PC-9 (cell line): ENCODE measurements at regions of chr22 and their contacts with region 1.

Region 1: GRCh38 chr22:30079952-30080533 is at the start of gene HORMAD2:
- DNase-seq: peak; percentile 70 to 80
- H3K4me3 ChIP-seq: peak within 1 kb of the TSS; percentile 58
- H3K27ac ChIP-seq: no peak within 1 kb of the TSS
- H3K4me1 ChIP-seq: no peaks in the 10 kb centered on the region
- H3K27me3 ChIP-seq: no peaks in the 10 kb centered on the region
- CTCF ChIP-seq: no peak
- total RNA-seq, gene HORMAD2: 0.20 TPM in 1 of 2 replicates, not detected in the other

Region 2: GRCh38 chr22:29654356-29654755 is 425.7 kb before region 1 on chr22:
- CTCF ChIA-PET with region 1: no interaction called
- POLR2A ChIA-PET with region 1: interaction called, 12 read pairs
- intact Hi-C with region 1: no loop called
- DNase-seq: no peak
- H3K4me3 ChIP-seq: no peak overlapping the region
- H3K27ac ChIP-seq: no peak overlapping the region
- H3K4me1 ChIP-seq: no peaks in the 10 kb centered on the region
- H3K27me3 ChIP-seq: no peaks in the 10 kb centered on the region
- CTCF ChIP-seq: no peak

Region 3: DNA sequence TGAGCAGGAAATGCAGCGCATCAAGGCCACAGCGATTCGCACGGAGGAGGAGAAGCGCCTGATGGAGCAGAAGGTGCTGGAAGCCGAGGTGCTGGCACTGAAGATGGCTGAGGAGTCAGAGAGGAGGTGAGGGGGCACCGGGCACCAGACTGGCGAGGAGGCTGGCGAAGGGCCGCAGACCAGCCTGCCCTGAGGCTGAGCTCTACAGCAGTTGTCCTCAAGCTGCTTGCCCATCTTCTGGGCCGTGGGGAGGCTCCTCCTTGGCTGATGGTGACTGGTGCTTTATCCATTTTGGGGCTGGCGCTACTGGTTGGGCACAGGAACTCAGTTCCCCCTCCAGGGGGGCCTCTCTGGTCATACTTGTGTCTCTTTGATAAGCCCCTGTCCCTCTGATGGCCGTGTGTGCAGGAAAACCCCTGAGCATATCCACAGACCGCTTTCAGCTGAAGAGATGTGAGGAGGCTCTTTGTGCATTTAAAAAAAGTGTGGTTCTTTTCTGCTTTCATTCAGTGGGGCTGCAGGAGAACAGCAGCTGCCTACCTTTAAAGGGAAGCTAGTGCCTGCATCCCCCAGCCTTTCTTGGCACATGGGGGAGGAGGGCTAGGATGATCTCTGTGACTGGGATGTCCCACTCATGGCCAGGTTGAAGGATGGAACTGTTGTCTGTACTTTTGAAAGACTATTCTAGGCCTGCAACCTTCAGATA is 406.5 kb before region 1 on chr22:
- CTCF ChIA-PET with region 1: no interaction called
- POLR2A ChIA-PET with region 1: no interaction called
- intact Hi-C with region 1: no loop called
- DNase-seq: no peak
- H3K4me3 ChIP-seq: no peak overlapping the region
- H3K27ac ChIP-seq: no peak overlapping the region
- H3K4me1 ChIP-seq: no peaks in the 10 kb centered on the region
- H3K27me3 ChIP-seq: no peaks in the 10 kb centered on the region
- CTCF ChIP-seq: no peak

Region 4: GRCh38 chr22:29710922-29711593 is 369.0 kb before region 1 on chr22:
- CTCF ChIA-PET with region 1: no interaction called
- POLR2A ChIA-PET with region 1: interaction called, 23 read pairs
- intact Hi-C with region 1: no loop called
- DNase-seq: peak in 1 of 2 experiments; percentile 80
- H3K4me3 ChIP-seq: no peak overlapping the region
- H3K27ac ChIP-seq: no peak overlapping the region
- H3K4me1 ChIP-seq: 0 out of 2 replicates have a peak, but pooled peaks cover 11% of the 10 kb centered on the region
- H3K27me3 ChIP-seq: no peaks in the 10 kb centered on the region
- CTCF ChIP-seq: no peak

Region 5: DNA sequence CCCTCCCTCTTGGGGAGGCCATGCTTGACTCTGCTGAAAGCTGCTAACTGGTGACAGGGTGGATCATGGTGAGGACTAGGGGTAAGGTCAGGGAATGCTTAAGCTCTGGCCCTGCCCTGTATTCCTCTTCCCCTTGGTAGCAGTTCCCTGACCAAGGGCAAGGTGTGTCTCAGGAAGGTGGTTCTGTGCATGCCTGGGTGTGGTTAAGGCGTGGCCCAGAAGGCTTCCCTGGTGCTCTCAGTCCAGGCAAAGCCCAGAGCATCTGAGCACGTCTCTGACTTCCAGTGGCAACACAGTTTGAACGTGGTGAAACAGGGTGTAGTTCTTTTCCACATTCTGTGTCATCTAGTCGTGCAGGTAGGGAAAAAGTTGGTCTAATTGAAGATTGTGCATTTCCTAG is 52.9 kb before region 1 on chr22:
- CTCF ChIA-PET with region 1: no interaction called
- POLR2A ChIA-PET with region 1: no interaction called
- intact Hi-C with region 1: loop called (anchors 10 kb)
- DNase-seq: peak in 1 of 2 experiments; percentile 43
- H3K4me3 ChIP-seq: no peak overlapping the region
- H3K27ac ChIP-seq: 0 out of 2 replicates have a peak overlapping the region, but pooled peaks have one; percentile 2
- H3K4me1 ChIP-seq: peaks cover 10% of the 10 kb centered on the region
- H3K27me3 ChIP-seq: no peaks in the 10 kb centered on the region
- CTCF ChIP-seq: no peak

Region 6: GRCh38 chr22:30094804-30095203 is 14.8 kb after region 1 on chr22:
- CTCF ChIA-PET with region 1: no interaction called
- POLR2A ChIA-PET with region 1: no interaction called
- intact Hi-C with region 1: no loop called
- DNase-seq: no peak
- H3K4me3 ChIP-seq: no peak overlapping the region
- H3K27ac ChIP-seq: no peak overlapping the region
- H3K4me1 ChIP-seq: peaks cover 4% of the 10 kb centered on the region
- H3K27me3 ChIP-seq: no peaks in the 10 kb centered on the region
- CTCF ChIP-seq: no peak

Region 7: GRCh38 chr22:30205281-30206115 is 125.5 kb after region 1 on chr22:
- CTCF ChIA-PET with region 1: no interaction called
- POLR2A ChIA-PET with region 1: no interaction called
- intact Hi-C with region 1: no loop called
- DNase-seq: peak in 1 of 2 experiments; percentile 91
- H3K4me3 ChIP-seq: peak overlapping the region; percentile 27; the same call in 1 of the 2 replicates
- H3K27ac ChIP-seq: peak overlapping the region; percentile 98
- H3K4me1 ChIP-seq: peaks cover 88% of the 10 kb centered on the region
- H3K27me3 ChIP-seq: no peaks in the 10 kb centered on the region
- CTCF ChIP-seq: no peak